Natural killer cell (primary cell): ENCODE measurements at regions of chr15 and their contacts with region 1.

Region 1: GRCh38 chr15:39686000-39686613 is 96.5 kb downstream of the FSIP1 start:
- DNase-seq: peak in 1 of 2 donors; percentile 74
- ATAC-seq: peak in 2 of 3 donors; percentile 69 to 74
- H3K4me3 ChIP-seq: no peak overlapping the region
- H3K4me3 Mint-ChIP-seq: no peak overlapping the region
- H3K27ac ChIP-seq: no peak overlapping the region
- H3K27ac Mint-ChIP-seq: peak overlapping the region; percentile 16 to 44
- H3K4me1 ChIP-seq: peaks cover 3% of the 10 kb centered on the region
- H3K4me1 Mint-ChIP-seq: peaks cover 12 to 27% of the 10 kb centered on the region in 2 donors
- H3K27me3 ChIP-seq: no peaks in the 10 kb centered on the region
- H3K27me3 Mint-ChIP-seq: no peaks in the 10 kb centered on the region
- CTCF ChIP-seq: peak; percentile 96

Region 2: DNA sequence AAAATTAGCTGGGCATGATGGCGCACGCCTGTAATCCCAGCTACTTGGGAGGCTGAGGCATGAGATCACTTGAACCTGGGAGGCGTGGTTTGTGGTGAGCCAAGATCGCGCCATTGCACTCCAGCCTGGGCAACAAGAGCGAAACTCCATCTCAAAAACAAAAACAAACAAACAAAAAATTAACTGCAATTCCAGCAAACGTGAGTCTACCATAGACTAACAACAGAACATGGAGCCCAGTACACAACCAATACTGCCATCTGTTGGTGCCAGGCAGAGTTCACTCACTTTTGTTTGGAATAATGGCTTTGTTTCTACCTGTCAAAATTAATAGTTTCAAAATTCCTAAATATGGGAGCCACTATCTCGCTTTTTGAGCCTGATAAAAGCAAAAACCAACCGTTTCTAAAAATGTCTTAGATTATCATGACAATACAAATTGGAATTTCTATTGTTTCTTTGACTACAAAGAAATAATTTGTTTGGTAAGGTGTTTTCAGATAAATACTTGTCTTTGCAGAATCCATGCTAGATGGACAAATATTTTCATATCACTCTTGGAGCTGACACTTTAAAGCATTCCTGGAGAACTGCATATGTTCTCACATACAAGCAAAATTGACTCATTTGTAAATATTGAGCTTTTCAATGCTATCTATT is 188.9 kb after region 1 on chr15:
- intact Hi-C with region 1: loop called (anchors 10 kb)
- DNase-seq: peak in 1 of 2 donors; percentile 55
- ATAC-seq: peak in 2 of 3 donors; percentile 50 to 52
- H3K4me3 ChIP-seq: no peak overlapping the region
- H3K4me3 Mint-ChIP-seq: no peak overlapping the region
- H3K27ac ChIP-seq: no peak overlapping the region
- H3K27ac Mint-ChIP-seq: no peak overlapping the region
- H3K4me1 ChIP-seq: no peaks in the 10 kb centered on the region
- H3K4me1 Mint-ChIP-seq: no peaks in the 10 kb centered on the region
- H3K27me3 ChIP-seq: no peaks in the 10 kb centered on the region
- H3K27me3 Mint-ChIP-seq: peaks cover 8 to 12% of the 10 kb centered on the region in 2 donors
- CTCF ChIP-seq: peak; percentile 40